HCT116 (cell line): ENCODE measurements at regions of chr12 and their contacts with region 1.

Region 1: DNA sequence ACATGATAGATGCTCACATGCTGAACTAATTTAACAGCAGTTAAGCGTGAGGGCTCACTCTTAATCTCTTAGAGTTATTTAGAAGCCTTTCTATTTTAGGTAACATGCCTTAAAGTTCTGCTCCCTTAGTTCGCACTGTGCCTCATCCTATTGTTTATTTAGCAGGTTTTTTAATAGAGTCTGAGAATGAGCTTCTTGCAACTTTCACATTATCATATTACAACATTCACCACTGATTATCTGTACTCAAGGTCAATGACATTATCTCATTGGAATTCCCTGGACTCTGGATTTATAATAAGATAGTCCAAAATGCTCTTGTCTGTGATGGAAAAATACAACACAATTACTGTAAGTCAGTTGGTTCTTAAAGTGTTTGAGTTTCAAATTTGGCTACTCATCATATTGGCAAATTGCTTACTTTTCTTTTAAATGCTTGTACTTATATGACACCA is 183.6 kb upstream of the SLC38A2 start:
- DNase-seq: peak; percentile 84
- ATAC-seq: peak; percentile 28
- H3K4me3 ChIP-seq: peak overlapping the region in 1 of 2 experiments; percentile 25; a peak in 2 of 4 replicates
- H3K27ac ChIP-seq: peak overlapping the region; percentile 91
- H3K4me1 ChIP-seq: peaks cover 84 to 91% of the 10 kb centered on the region in 2 experiments
- H3K27me3 ChIP-seq: no peaks in the 10 kb centered on the region
- CTCF ChIP-seq: no peak
- POLR2A ChIP-seq: no peak
- RAD21 ChIP-seq: peak; percentile 30; the same call in 1 of the 2 replicates

Region 2: GRCh38 chr12:45990468-45991283 is 565.5 kb before region 1 on chr12 and contains the start of gene SCAF11:
- CTCF ChIA-PET with region 1: no interaction called
- POLR2A ChIA-PET with region 1: no interaction called
- RAD21 ChIA-PET with region 1: no interaction called
- intact Hi-C with region 1: loop called (anchors 5 kb)
- DNase-seq: peak; percentile 100
- ATAC-seq: peak; percentile 84
- H3K4me3 ChIP-seq: peak within 1 kb of the TSS; percentile 85 to 89
- H3K27ac ChIP-seq: peak within 1 kb of the TSS; percentile 98
- H3K4me1 ChIP-seq: peaks cover 13 to 22% of the 10 kb centered on the region in 2 experiments
- H3K27me3 ChIP-seq: no peaks in the 10 kb centered on the region
- CTCF ChIP-seq: peak; percentile 81 to 92 (median 91); a peak in 5 of 6 replicates
- POLR2A ChIP-seq: peak; percentile 74
- RAD21 ChIP-seq: peak; percentile 98
- total RNA-seq, gene SCAF11: 79.8 TPM

Region 3: DNA sequence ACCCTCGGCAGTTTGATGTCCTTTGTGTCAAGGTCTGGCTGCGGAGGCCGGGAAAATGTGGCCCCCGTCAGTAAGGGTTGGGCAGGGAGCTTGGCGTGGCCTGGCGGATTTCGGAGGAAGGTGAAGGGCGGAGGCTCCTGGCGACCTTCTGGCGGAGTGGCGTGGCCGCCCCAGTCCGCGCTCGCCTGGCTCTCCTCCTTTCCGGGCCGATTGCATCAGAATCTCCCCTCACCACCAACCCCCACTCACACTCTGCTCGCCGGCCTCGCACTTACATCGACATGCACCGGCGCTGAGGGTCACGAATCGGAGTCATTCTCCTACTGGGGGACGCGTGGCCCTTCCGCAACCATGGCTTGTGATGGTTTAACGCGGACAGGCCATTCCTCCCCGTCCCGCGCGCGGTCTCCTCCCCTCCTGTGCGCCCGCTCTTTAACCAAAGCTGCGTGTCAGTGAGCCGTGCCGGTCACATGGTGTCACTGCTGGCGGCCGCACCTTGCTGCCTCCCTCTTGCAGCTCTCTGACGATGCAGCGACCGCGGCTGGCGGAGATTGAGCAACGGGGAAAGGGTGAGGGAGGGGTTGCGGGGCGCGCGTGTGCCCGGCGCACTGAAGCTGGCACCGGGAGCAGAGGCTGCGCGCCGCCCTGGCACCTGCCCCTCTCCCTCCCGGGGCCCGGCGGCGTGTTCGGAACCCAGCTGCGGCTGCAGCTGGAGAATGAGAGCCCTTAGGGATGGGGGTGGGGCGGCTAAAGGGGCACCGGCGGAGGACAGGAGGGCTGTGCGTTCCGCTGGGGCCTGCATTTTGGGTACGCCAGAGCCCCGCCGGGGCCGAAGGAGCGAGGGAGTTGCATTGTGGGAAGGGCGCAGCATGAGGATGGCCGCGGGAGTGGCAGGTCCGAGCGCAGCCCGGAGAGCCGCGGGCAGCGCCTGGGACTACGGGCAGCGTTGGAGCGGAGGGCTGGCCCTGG is 287.3 kb before region 1 on chr12 and contains the start of gene SLC38A1:
- CTCF ChIA-PET with region 1: no interaction called
- POLR2A ChIA-PET with region 1: no interaction called
- RAD21 ChIA-PET with region 1: no interaction called
- intact Hi-C with region 1: loop called (anchors 10 kb)
- DNase-seq: peak; percentile 62
- ATAC-seq: peak; percentile 80
- H3K4me3 ChIP-seq: peak within 1 kb of the TSS; percentile 69 to 95
- H3K27ac ChIP-seq: peak within 1 kb of the TSS; percentile 76
- H3K4me1 ChIP-seq: peaks cover 25 to 47% of the 10 kb centered on the region in 2 experiments
- H3K27me3 ChIP-seq: no peaks in the 10 kb centered on the region
- CTCF ChIP-seq: no peak
- POLR2A ChIP-seq: peak; percentile 63
- RAD21 ChIP-seq: 0 out of 2 replicates have a peak, but pooled peaks have one; percentile 8
- total RNA-seq, gene SLC38A1: 155 TPM

Region 4: GRCh38 chr12:46933947-46934346 is 377.8 kb after region 1 on chr12:
- CTCF ChIA-PET with region 1: no interaction called
- POLR2A ChIA-PET with region 1: no interaction called
- RAD21 ChIA-PET with region 1: no interaction called
- intact Hi-C with region 1: loop called (anchors 10 kb)
- DNase-seq: no peak
- ATAC-seq: peak; percentile 82
- H3K4me3 ChIP-seq: no peak overlapping the region
- H3K27ac ChIP-seq: no peak overlapping the region
- H3K4me1 ChIP-seq: peaks cover 5 to 9% of the 10 kb centered on the region in 2 experiments; a peak in 2 of 4 replicates
- H3K27me3 ChIP-seq: no peaks in the 10 kb centered on the region
- CTCF ChIP-seq: peak; percentile 40 to 62 (median 48); a peak in 5 of 6 replicates
- POLR2A ChIP-seq: no peak
- RAD21 ChIP-seq: peak; percentile 79